ENCODE measurements at regions of chr15 and their contacts with region 1.

Region 1: DNA sequence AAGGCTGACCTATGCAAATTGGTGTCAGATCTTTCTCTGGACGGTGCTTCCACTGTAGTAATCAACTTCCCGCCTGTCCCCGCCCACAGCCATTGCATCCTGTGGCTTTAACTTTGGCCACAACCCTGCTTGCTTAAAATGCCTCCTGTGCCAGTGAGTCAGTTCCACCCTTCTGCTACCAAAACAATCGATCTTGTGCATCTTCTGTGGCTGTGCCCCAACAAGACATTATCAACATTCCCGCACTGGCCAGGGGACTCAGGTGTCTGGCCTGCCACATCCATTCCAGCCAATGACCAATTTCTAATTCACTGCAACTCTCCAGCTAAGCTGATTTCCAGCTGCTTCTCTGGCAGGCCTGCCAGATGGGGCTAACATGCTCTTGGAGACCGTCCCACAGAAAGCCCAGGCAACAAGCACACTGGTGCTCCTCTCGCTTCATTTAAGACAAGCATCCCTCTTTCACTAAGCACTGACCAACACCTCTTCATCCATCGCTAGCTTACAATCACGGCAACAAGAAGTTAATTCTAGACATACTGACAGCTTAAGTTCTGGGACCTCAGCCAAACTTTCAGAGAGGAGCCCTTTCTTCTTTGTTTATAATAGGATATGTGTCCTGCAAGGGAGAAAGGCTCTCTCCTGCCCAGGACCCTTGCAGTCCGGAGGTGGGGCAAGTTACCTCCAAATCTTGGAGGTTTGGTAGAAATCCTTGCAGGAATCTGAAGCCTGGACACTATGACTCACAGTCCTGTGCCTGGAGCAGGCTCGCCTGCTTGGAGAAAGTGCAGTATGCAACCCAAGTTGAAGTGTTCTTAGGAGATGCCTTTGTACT is 6.7 kb downstream of the CA12 start:
- DNase-seq: peak; percentile 81
- H3K4me3 Mint-ChIP-seq: no peak overlapping the region
- H3K27ac Mint-ChIP-seq: peak overlapping the region; percentile 60
- H3K4me1 Mint-ChIP-seq: peaks cover 41% of the 10 kb centered on the region
- H3K27me3 Mint-ChIP-seq: peaks cover 29% of the 10 kb centered on the region

Region 2: GRCh38 chr15:62935300-62936081 is 439.4 kb before region 1 on chr15:
- CTCF ChIA-PET with region 1: no interaction called
- POLR2A ChIA-PET with region 1: no interaction called
- intact Hi-C with region 1: loop called (anchors 5 kb)
- DNase-seq: no peak
- H3K4me3 Mint-ChIP-seq: no peak overlapping the region
- H3K27ac Mint-ChIP-seq: no peak overlapping the region
- H3K4me1 Mint-ChIP-seq: peaks cover 11% of the 10 kb centered on the region
- H3K27me3 Mint-ChIP-seq: peaks cover 35% of the 10 kb centered on the region

Region 3: DNA sequence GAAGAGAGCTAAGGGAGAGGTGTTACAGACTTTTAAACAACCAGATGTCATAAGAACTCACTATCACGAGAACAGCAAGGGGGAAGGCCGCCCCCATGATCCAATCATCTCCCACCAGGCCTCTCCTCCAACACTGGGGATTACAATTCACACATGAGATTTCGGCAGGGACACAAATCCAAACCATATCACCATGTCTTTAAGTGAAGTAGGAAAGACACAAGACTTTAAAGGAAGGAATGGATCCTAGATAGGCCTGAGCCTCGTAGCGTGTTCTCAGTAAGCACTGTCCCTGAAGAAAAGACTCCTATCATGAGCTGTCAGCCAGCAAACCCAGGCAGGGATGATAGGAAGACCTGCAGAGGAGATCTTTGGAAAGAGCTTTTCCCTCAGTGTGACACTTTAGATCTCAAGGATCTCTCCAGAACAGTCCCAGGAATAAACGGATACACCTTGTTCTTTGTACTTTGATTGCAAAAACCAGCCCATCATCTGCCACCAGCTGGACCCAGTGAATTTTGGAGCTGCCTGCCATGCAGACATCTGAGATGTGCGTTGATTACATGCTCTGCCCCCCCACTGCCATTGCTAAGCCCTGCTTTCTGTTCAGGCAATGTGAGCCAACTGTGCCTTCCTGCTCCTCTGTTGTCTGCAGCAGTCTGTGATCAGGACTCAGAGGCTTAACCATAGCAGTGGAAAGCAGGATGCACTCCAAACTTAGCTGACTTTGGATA is 202.4 kb before region 1 on chr15:
- CTCF ChIA-PET with region 1: no interaction called
- POLR2A ChIA-PET with region 1: no interaction called
- intact Hi-C with region 1: no loop called
- DNase-seq: no peak
- H3K4me3 Mint-ChIP-seq: no peak overlapping the region
- H3K27ac Mint-ChIP-seq: no peak overlapping the region
- H3K4me1 Mint-ChIP-seq: peaks cover 11% of the 10 kb centered on the region
- H3K27me3 Mint-ChIP-seq: no peaks in the 10 kb centered on the region

Region 4: GRCh38 chr15:63327648-63328421 is 47.1 kb before region 1 on chr15:
- CTCF ChIA-PET with region 1: no interaction called
- POLR2A ChIA-PET with region 1: no interaction called
- intact Hi-C with region 1: loop called (anchors 5 kb)
- DNase-seq: no peak
- H3K4me3 Mint-ChIP-seq: no peak overlapping the region
- H3K27ac Mint-ChIP-seq: no peak overlapping the region
- H3K4me1 Mint-ChIP-seq: peaks cover 6% of the 10 kb centered on the region
- H3K27me3 Mint-ChIP-seq: no peaks in the 10 kb centered on the region